ENCODE measurements at regions of chr12 and their contacts with region 1.

Region 1: GRCh38 chr12:56657416-56658379 is 11.9 kb upstream of the ATP5F1B start:
- DNase-seq: no peak
- H3K4me3 ChIP-seq: no peak overlapping the region
- H3K27me3 ChIP-seq: no peaks in the 10 kb centered on the region
- CTCF ChIP-seq: no peak

Region 2: DNA sequence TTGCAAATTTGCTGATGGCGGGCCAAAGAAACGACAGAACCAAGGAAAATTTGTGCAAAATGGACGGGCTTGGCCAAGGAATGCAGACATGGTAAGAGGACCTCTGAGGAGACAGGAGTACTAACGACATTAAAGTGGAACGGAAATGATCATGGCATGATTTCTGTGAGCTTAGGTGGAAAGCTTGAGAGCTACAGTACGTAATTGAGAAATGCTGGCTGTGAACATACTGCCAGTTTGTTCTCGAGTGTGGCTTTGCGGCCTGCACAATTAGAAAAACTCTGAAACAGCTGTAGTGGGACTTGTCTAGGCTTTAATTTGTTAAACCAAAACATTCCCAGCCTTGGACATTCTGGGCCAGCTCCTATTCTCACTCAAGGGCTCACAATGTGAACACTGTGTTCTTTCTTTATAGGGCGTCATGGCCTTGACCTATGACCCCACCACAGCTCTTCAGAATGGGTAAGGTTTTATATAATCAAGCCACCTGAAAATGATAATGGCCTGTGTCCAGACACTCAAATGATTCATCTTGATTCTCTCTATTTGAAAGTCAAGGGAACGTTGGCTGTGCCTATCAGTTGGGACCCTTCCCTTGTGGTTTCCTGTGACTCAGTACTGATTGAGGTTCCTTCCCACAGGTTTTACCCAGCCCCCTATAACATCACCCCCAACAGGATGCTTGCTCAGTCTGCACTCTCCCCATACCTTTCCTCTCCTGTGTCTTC is 76.1 kb before region 1 on chr12:
- CTCF ChIA-PET with region 1: no interaction called
- POLR2A ChIA-PET with region 1: no interaction called
- DNase-seq: no peak
- H3K4me3 ChIP-seq: no peak overlapping the region
- H3K27me3 ChIP-seq: no peaks in the 10 kb centered on the region
- CTCF ChIP-seq: no peak

Region 3: DNA sequence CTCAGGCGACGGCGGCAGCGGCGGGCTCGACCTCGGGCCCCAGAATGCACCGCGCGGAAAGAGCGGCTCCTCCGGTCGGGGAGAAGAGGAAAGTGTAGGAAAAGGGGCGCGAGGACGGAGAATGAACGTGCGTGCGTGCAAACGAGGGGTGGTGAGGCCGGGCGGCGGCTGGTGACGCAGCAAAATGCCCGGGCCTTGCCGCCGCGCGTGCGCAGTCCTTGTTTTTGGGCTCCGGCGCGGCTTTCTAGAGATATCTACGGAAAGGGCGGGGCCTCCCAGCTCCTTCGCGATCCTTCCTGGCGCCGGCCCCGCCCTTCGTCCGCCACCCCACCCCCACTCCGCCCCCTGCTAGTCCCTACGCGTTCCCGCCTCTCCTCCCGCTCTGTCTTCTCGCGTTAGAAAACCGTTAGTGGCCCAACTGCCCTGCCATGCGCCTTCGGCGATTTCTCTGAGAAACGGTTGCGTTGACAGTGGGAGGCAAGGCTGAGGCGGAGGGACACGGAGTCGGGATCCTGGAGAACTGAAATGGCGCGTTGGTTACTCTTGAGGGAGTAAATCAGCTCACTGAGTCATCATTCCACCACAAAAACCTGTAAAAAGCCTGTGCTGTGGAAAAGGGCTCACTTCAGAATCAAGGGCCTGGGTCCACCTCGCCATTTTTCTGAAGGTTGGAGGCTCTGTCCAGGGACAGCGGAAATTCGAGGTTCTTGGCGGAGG is 30.6 kb after region 1 on chr12 and contains the start of gene PTGES3:
- CTCF ChIA-PET with region 1: no interaction called
- POLR2A ChIA-PET with region 1: interaction called, 18 read pairs
- DNase-seq: peak; percentile 92
- H3K4me3 ChIP-seq: peak within 1 kb of the TSS; percentile 73
- H3K27me3 ChIP-seq: no peaks in the 10 kb centered on the region
- CTCF ChIP-seq: no peak
- polyA plus RNA-seq, gene PTGES3: 24.7 and 49.1 TPM in 2 replicates

Measured in BJ (cell line).